ENCODE measurements at regions of chr6 and their contacts with region 1.

Region 1: GRCh38 chr6:16854986-16855385 is 93.7 kb upstream of the ATXN1 start:
- DNase-seq: no peak
- ATAC-seq: no peak
- H3K4me3 ChIP-seq: no peak overlapping the region
- H3K27ac ChIP-seq: no peak overlapping the region
- H3K4me1 ChIP-seq: peaks cover 0 to 23% (median under 1%) of the 10 kb centered on the region in 9 donors
- H3K27me3 ChIP-seq: peaks cover 0 to 3% (median 0%) of the 10 kb centered on the region in 7 donors
- CTCF ChIP-seq: no peak

Region 2: DNA sequence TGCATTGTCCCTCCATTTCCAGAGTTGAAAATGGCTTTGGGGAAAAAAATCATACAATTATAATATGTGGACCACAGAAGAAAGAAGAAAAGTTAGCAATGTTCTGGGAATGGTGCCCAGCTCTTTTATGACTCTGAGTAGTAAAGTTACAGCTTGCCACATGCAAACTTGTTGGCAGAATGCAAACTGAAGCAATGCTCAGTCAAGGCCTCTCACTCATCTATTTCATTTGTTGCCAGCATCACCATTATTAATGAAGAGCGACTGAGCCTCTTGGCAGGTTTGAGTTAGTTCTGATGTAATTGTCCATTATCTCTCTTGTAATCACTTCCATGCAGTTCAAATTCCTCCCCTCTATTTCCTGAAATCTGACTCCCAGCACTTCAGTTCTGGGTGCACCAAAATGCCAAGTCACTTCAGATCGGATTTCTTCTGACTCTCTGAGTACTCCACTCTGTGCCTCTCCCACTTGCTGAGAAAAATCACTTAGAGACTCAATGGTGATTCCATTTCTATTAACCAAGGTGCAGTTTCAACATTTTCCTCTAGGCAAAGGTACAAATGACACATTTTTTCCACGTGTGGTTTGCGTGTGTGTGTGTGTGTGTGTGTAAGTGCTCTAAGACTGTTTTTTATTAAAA is 92.5 kb after region 1 on chr6:
- intact Hi-C with region 1: loop called in 1 of 10 experiments (anchors 10 kb)
- DNase-seq: no peak
- ATAC-seq: peak; percentile 24 to 91 (median 55)
- H3K4me3 ChIP-seq: no peak overlapping the region
- H3K27ac ChIP-seq: no peak overlapping the region
- H3K4me1 ChIP-seq: peaks cover 0 to 27% (median 6%) of the 10 kb centered on the region in 9 donors
- H3K27me3 ChIP-seq: no peaks in the 10 kb centered on the region
- CTCF ChIP-seq: no peak

Measured in heart right ventricle (tissue), 16 donors.